ENCODE measurements at regions of chr15 and their contacts with region 1.

Region 1: GRCh38 chr15:74382004-74382816 is 14.8 kb upstream of the CYP11A1 start:
- DNase-seq: peak; percentile 85
- ATAC-seq: peak; percentile 57
- H3K4me3 Mint-ChIP-seq: no peak overlapping the region
- H3K27ac Mint-ChIP-seq: peak overlapping the region; percentile 54
- H3K4me1 Mint-ChIP-seq: peaks cover 66% of the 10 kb centered on the region
- H3K27me3 Mint-ChIP-seq: no peaks in the 10 kb centered on the region

Region 2: DNA sequence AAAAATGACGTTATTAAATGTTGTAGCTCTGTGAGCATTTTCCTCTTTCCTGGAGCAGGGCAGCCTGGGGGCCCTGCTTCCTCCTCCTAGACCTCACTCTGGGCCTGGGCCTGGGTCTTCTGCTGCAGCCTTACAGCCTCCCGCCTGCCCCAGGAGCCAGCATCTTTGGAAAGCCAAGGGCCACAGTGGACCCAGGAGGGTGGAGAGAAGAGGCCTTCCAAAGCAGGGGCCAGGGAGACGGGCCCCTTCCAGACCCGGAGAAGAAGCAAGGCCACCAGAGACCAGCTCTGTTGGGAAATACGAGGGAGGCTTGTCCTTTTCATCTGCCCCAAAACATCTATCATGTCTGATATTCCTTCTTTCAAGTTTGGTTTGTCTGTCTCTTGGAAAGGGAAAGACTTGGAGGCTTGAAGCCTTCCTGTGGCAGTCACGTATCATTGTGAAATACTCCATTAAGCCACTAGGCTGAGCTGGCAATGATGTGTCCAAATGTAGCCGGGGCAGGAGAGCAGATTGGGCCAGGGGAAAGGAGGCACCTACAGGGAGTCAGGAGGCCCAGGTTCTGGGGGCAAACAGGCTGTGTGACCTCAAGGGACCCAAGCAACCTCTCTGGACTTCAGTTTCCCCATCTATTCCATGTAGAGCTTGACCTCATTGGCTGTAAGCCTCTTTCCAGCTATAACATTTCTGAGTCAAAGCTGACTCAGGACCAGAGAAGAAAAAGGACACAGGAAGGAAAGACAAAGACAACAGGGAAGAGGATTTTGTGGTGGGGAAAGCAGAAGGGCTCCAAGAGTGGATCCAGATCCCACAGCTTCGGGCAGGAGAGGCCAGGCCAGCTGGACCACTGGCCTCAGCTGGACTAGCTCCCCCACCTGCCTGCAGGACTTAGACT is 45.9 kb before region 1 on chr15:
- CTCF ChIA-PET with region 1: no interaction called
- POLR2A ChIA-PET with region 1: no interaction called
- DNase-seq: no peak
- ATAC-seq: no peak
- H3K4me3 Mint-ChIP-seq: no peak overlapping the region
- H3K27ac Mint-ChIP-seq: no peak overlapping the region
- H3K4me1 Mint-ChIP-seq: no peaks in the 10 kb centered on the region
- H3K27me3 Mint-ChIP-seq: peaks cover 4% of the 10 kb centered on the region

Region 3: DNA sequence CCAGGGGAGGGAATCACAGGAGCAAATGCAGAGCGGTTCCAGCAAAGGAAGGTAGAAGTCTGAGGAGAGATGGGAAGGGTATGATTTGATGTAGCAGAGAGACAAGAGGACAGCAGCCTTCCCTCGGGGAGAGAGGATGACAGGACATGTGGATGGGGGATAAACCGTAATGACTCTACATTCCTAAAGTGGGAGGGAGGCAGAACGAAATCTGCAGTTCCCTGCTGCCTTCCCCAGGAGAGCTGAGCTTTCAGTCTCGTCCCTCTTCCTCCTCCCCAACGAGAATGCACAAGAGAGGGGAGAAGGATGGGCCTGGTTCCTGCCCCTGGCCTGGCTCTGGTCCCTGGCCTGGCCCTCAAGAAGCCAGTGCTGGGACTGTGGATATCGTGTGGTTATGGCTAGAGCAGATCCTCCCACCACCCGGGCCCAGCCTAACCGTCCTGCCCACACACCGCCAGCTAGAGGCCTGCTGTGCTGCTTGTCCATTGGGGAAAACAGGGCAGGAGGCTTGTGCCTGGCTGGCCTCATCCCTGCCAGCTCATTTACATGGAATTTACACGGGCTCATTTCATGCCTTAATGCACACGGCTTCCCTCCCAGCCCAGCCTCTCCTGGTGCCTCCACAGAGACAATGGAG is 25.0 kb after region 1 on chr15:
- CTCF ChIA-PET with region 1: interaction called, 108 read pairs
- POLR2A ChIA-PET with region 1: interaction called, 55 read pairs
- DNase-seq: no peak
- ATAC-seq: no peak
- H3K4me3 Mint-ChIP-seq: no peak overlapping the region
- H3K27ac Mint-ChIP-seq: peak overlapping the region; percentile 35
- H3K4me1 Mint-ChIP-seq: peaks cover 33% of the 10 kb centered on the region
- H3K27me3 Mint-ChIP-seq: no peaks in the 10 kb centered on the region

Region 4: DNA sequence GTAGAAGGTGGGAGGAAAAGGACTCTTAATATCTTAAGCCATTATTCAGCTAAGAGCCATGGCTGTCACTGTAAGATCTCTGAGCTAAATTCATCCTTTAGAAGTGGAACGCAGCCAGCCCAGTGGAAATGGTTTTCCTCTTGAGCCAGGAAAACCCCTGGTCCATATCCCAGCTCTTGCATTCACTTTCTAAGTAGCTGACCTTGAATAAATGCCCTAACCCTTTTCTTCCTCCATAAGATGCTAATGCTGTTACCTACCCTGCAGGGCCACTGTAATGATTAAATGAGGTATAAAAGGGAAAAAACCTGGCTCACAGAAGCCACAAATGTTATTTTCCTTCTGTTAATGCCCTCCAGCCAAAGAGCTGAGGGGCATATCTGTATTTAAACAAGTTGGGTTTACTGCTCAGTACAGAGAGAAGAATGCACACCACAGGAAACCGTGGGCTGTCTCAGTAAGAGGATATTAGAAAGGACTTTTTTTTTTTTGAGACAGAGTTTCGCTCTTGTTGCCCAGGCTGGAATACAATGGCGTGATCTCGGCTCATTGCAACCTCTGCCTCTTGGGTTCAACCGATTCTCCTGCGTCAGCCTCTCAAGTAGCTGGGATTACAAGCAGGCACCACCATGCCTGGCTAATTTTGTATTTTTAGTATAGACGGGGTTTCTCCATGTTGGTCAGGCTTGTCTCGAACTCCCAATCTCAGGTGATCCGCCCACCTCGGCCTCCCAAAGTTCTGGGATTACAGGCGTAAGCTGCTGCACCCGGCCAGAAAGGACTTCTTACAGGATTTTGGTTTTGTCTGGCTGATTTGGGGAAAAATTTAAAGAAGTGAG is 71.9 kb after region 1 on chr15:
- CTCF ChIA-PET with region 1: interaction called, 16 read pairs
- POLR2A ChIA-PET with region 1: interaction called, 3 read pairs
- DNase-seq: no peak
- ATAC-seq: peak; percentile 90
- H3K4me3 Mint-ChIP-seq: peak overlapping the region; percentile 25
- H3K27ac Mint-ChIP-seq: peak overlapping the region; percentile 82
- H3K4me1 Mint-ChIP-seq: peaks cover 43% of the 10 kb centered on the region
- H3K27me3 Mint-ChIP-seq: no peaks in the 10 kb centered on the region

Region 5: GRCh38 chr15:74489518-74490338 is 107.5 kb after region 1 on chr15:
- CTCF ChIA-PET with region 1: interaction called, 15 read pairs
- POLR2A ChIA-PET with region 1: no interaction called
- DNase-seq: peak; percentile 92
- ATAC-seq: peak; percentile 96
- H3K4me3 Mint-ChIP-seq: peak overlapping the region; percentile 73
- H3K27ac Mint-ChIP-seq: peak overlapping the region; percentile 91
- H3K4me1 Mint-ChIP-seq: peaks cover 34% of the 10 kb centered on the region
- H3K27me3 Mint-ChIP-seq: no peaks in the 10 kb centered on the region

Region 6: DNA sequence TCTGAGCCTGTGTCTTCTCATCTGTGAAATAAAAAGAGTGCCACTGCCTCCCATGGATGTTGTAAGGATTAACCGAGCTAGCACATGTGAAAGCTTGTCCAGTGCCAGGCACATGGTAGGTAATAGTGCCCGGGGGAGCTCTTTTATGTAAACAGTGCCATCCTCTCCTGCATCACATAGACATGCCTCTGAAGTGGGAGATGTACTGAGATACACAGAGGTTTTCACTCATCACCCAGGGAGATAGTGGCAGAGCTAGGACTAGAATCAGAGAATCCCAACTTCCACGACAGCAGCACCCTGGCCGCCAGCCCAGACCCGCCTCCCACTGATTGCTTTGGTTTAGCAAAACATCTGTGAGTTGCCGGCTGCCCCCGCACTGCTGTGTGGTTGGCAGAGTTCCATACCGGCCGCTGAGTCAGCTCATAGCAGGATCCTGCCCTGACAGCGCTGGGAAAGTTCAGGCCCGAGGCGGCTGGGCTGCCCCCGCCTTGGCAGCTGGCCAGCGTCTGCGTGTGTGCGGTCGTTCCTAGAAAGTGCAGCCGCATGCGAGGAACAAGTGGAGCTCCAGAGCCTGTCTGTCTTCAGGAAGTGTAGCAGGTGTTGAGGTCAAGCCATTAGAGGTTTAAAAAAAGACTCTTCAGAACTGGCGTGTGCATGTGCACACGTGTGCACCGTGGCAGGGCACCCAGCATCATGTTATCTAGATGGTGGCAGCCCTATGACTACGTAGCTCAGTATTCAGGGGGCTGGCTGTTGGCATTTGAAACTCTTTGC is 163.9 kb after region 1 on chr15:
- CTCF ChIA-PET with region 1: interaction called, 14 read pairs
- POLR2A ChIA-PET with region 1: interaction called, 8 read pairs
- DNase-seq: peak; percentile 88
- ATAC-seq: peak; percentile 79
- H3K4me3 Mint-ChIP-seq: peak overlapping the region; percentile 71
- H3K27ac Mint-ChIP-seq: peak overlapping the region; percentile 68
- H3K4me1 Mint-ChIP-seq: peaks cover 79% of the 10 kb centered on the region
- H3K27me3 Mint-ChIP-seq: no peaks in the 10 kb centered on the region

Measured in activated CD8-positive, alpha-beta T cell treated with anti-CD3 and anti-CD28 coated beads, Interleukin-2, amount 10 ng/mL, durations not matched to agents 7 days and 5 days (primary cell).